ENCODE measurements at regions of chr19 and their contacts with region 1.

Region 1: GRCh38 chr19:39052243-39052746 is 19.9 kb upstream of the FBXO27 start:
- DNase-seq: peak; percentile 72 to 77
- H3K4me3 ChIP-seq: no peak overlapping the region
- H3K4me3 Mint-ChIP-seq: no peak overlapping the region
- H3K27ac Mint-ChIP-seq: no peak overlapping the region
- H3K4me1 ChIP-seq: peaks cover 15% of the 10 kb centered on the region
- H3K4me1 Mint-ChIP-seq: peaks cover 19% of the 10 kb centered on the region
- H3K27me3 ChIP-seq: no peaks in the 10 kb centered on the region
- H3K27me3 Mint-ChIP-seq: no peaks in the 10 kb centered on the region
- CTCF ChIP-seq: peak; percentile 69 to 87

Region 2: DNA sequence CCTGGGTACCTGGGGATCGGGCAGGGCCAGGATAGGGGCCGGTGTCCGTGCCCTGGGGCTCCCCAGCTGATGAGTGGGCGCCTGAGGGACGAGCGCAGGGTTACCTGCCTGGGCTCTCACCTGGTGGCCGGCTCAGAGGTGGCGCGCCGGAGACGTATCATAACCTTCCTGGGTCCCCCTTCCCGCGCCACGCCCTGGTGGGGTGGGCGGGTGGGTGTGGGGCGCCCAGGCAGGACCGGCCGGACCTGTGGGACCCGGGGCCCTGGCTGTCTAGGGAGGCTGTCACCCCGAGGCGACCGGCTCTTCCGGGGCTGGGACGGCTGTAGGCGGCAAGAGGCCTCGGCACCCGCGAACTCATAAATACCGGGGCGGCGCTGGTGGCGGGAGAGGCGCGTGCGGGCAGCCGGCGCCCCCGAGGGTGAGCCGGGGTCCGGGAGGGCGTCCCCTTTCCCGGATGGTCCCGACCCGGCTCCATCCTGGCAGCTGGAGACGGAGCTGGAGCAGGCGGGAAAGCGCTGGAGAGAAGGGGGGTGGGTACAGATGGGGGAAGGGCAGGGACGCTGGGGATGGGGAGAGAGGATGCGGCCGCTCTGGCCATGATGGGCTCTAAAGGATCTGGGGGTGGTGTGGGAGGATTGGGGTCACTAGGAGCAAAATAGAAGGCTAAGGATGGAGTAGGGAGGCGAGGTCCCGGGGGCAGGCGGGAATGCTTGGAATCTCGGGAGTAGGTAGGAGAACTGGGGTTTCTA is 31.9 kb after region 1 on chr19 and contains the start of gene ACP7:
- CTCF ChIA-PET with region 1: no interaction called
- POLR2A ChIA-PET with region 1: no interaction called
- intact Hi-C with region 1: loop called (anchors 2 kb)
- DNase-seq: peak; percentile 53 to 61
- H3K4me3 ChIP-seq: peak within 1 kb of the TSS; percentile 51
- H3K4me3 Mint-ChIP-seq: peak within 1 kb of the TSS; percentile 84
- H3K27ac Mint-ChIP-seq: no peak within 1 kb of the TSS
- H3K4me1 ChIP-seq: 0 out of 2 replicates have a peak, but pooled peaks cover 5% of the 10 kb centered on the region
- H3K4me1 Mint-ChIP-seq: peaks cover 7% of the 10 kb centered on the region
- H3K27me3 ChIP-seq: no peaks in the 10 kb centered on the region; the same call in none of the 2 replicates
- H3K27me3 Mint-ChIP-seq: peaks cover 12% of the 10 kb centered on the region
- CTCF ChIP-seq: no peak
- total RNA-seq, gene ACP7: 0.45 and 0.46 TPM in 2 replicates